Naive thymus-derived CD4-positive, alpha-beta T cell (primary cell): ENCODE measurements at regions of chr1 and their contacts with region 1.

Region 1: DNA sequence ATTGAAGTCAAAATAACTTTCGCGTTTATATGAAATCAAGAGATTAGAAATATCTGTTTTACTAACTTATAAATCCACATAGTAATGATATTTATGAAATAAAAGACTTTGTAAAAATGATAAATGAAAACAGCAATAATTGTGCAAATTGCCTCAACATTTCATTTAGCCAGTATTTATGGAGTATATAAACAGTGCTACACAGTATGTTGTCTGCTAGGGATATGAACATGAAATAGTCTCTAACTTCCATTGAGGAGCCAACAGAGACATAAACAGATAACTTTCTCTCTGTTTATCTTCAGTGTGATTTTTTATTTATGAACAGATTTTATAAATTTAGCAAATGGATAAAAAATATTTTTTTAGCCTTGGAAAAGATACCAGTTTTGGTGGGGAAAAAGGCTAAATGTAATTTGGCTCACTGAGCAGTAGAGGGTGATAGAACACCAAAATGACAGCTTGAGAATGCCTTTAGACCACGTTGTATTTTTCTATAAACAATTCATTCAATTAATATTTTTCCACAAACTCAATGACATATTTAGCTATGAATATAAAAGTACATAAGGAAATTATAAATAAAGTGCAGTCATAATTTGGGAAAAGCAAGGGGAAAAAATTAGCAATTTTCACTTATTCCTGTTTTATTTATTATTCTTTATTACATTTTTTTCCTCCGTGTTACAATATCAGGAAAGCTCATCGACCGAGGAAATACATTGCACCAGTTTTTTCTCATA is 47.5 kb upstream of the EEIG2 start:
- DNase-seq: peak in 6 of 9 donors; percentile 27 to 58 (median 50)
- ATAC-seq: peak; percentile 85
- H3K4me3 ChIP-seq: no peak overlapping the region
- H3K4me3 Mint-ChIP-seq: no peak overlapping the region
- H3K27ac ChIP-seq: no peak overlapping the region
- H3K27ac Mint-ChIP-seq: no peak overlapping the region
- H3K4me1 ChIP-seq: no peaks in the 10 kb centered on the region
- H3K4me1 Mint-ChIP-seq: no peaks in the 10 kb centered on the region
- H3K27me3 ChIP-seq: no peaks in the 10 kb centered on the region
- H3K27me3 Mint-ChIP-seq: peaks cover 4 to 64% (median 12%) of the 10 kb centered on the region in 5 donors

Region 2: DNA sequence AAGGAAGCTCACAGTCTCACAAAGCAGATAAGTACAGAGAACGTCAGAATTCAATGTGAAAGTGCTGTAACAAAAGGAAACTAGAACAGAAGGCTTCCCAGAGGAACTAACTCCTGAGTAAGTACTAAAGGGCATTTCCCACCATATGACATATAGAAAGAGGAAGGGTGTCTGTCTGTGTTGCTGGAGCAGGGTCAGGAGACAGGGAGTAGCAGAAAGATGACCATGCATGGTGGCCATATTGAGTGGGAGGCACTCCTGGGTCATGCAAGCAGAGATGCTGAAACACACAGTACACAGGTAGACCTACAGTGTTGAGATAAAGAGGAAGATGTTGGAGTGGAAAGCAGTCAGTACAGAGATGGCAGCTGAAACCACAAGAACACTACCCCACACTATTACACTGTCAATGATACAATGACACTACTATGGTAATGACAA is 359.6 kb before region 1 on chr1:
- CTCF ChIA-PET with region 1: no interaction called
- POLR2A ChIA-PET with region 1: no interaction called
- intact Hi-C with region 1: no loop called
- DNase-seq: no peak
- ATAC-seq: peak; percentile 42
- H3K4me3 ChIP-seq: no peak overlapping the region
- H3K4me3 Mint-ChIP-seq: no peak overlapping the region
- H3K27ac ChIP-seq: no peak overlapping the region
- H3K27ac Mint-ChIP-seq: no peak overlapping the region
- H3K4me1 ChIP-seq: no peaks in the 10 kb centered on the region
- H3K4me1 Mint-ChIP-seq: no peaks in the 10 kb centered on the region
- H3K27me3 ChIP-seq: no peaks in the 10 kb centered on the region
- H3K27me3 Mint-ChIP-seq: no peaks in the 10 kb centered on the region

Region 3: GRCh38 chr1:108570128-108570527 is 57.7 kb after region 1 on chr1:
- CTCF ChIA-PET with region 1: interaction called, 5 read pairs
- POLR2A ChIA-PET with region 1: no interaction called
- intact Hi-C with region 1: loop called in 1 of 2 experiments (anchors 2 kb)
- DNase-seq: peak in 4 of 9 donors; percentile 13 to 37 (median 20)
- ATAC-seq: peak; percentile 96
- H3K4me3 ChIP-seq: no peak overlapping the region
- H3K4me3 Mint-ChIP-seq: no peak overlapping the region
- H3K27ac ChIP-seq: no peak overlapping the region
- H3K27ac Mint-ChIP-seq: no peak overlapping the region
- H3K4me1 ChIP-seq: peaks cover 0 to 6% of the 10 kb centered on the region in 2 donors
- H3K4me1 Mint-ChIP-seq: peaks cover 0 to 6% (median 4%) of the 10 kb centered on the region in 7 donors
- H3K27me3 ChIP-seq: no peaks in the 10 kb centered on the region
- H3K27me3 Mint-ChIP-seq: no peaks in the 10 kb centered on the region

Region 4: GRCh38 chr1:108643492-108644335 is 131.3 kb after region 1 on chr1:
- CTCF ChIA-PET with region 1: interaction called, 64 read pairs
- POLR2A ChIA-PET with region 1: interaction called, 10 read pairs
- intact Hi-C with region 1: loop called (anchors 1 kb)
- DNase-seq: peak in 7 of 9 donors; percentile 59 to 78 (median 67)
- ATAC-seq: peak; percentile 45
- H3K4me3 ChIP-seq: no peak overlapping the region
- H3K4me3 Mint-ChIP-seq: peak overlapping the region in 9 of 10 donors; percentile 4 to 70 (median 47)
- H3K27ac ChIP-seq: peak overlapping the region; percentile 71
- H3K27ac Mint-ChIP-seq: peak overlapping the region; percentile 68 to 100 (median 98)
- H3K4me1 ChIP-seq: peaks cover 49 to 52% of the 10 kb centered on the region in 2 donors
- H3K4me1 Mint-ChIP-seq: peaks cover 55 to 81% (median 75%) of the 10 kb centered on the region in 7 donors
- H3K27me3 ChIP-seq: no peaks in the 10 kb centered on the region
- H3K27me3 Mint-ChIP-seq: no peaks in the 10 kb centered on the region

Region 5: GRCh38 chr1:108708691-108709660 is 196.6 kb after region 1 on chr1:
- CTCF ChIA-PET with region 1: no interaction called
- POLR2A ChIA-PET with region 1: no interaction called
- intact Hi-C with region 1: loop called (anchors 1 to 2 kb)
- DNase-seq: peak; percentile 24 to 65 (median 54)
- ATAC-seq: peak; percentile 87
- H3K4me3 ChIP-seq: no peak overlapping the region
- H3K4me3 Mint-ChIP-seq: peak overlapping the region in 2 of 10 donors; percentile 15 to 38
- H3K27ac ChIP-seq: no peak overlapping the region
- H3K27ac Mint-ChIP-seq: peak overlapping the region in 3 of 9 donors; percentile 1 to 38 (median 2)
- H3K4me1 ChIP-seq: peaks cover 21 to 24% of the 10 kb centered on the region in 2 donors
- H3K4me1 Mint-ChIP-seq: peaks cover 7 to 44% (median 33%) of the 10 kb centered on the region in 7 donors
- H3K27me3 ChIP-seq: no peaks in the 10 kb centered on the region
- H3K27me3 Mint-ChIP-seq: peaks cover 0 to 20% (median 0%) of the 10 kb centered on the region in 5 donors

Region 6: GRCh38 chr1:108828022-108828961 is 315.9 kb after region 1 on chr1:
- CTCF ChIA-PET with region 1: no interaction called
- POLR2A ChIA-PET with region 1: no interaction called
- intact Hi-C with region 1: loop called in 1 of 2 experiments (anchors 1 kb)
- DNase-seq: peak; percentile 37 to 62 (median 46)
- ATAC-seq: peak; percentile 61
- H3K4me3 ChIP-seq: no peak overlapping the region
- H3K4me3 Mint-ChIP-seq: no peak overlapping the region
- H3K27ac ChIP-seq: no peak overlapping the region
- H3K27ac Mint-ChIP-seq: no peak overlapping the region
- H3K4me1 ChIP-seq: no peaks in the 10 kb centered on the region
- H3K4me1 Mint-ChIP-seq: peaks cover 0 to 9% (median 0%) of the 10 kb centered on the region in 7 donors
- H3K27me3 ChIP-seq: peaks cover 0 to 3% of the 10 kb centered on the region in 2 donors
- H3K27me3 Mint-ChIP-seq: peaks cover 0 to 12% (median 0%) of the 10 kb centered on the region in 5 donors

Region 7: GRCh38 chr1:108897865-108898720 is 385.7 kb after region 1 on chr1:
- CTCF ChIA-PET with region 1: no interaction called
- POLR2A ChIA-PET with region 1: no interaction called
- intact Hi-C with region 1: loop called (anchors 1 to 5 kb)
- DNase-seq: peak in 7 of 9 donors; percentile 30 to 67 (median 54)
- ATAC-seq: peak; percentile 82
- H3K4me3 ChIP-seq: no peak overlapping the region
- H3K4me3 Mint-ChIP-seq: no peak overlapping the region
- H3K27ac ChIP-seq: no peak overlapping the region
- H3K27ac Mint-ChIP-seq: no peak overlapping the region
- H3K4me1 ChIP-seq: no peaks in the 10 kb centered on the region
- H3K4me1 Mint-ChIP-seq: peaks cover 0 to 4% (median 1%) of the 10 kb centered on the region in 7 donors
- H3K27me3 ChIP-seq: no peaks in the 10 kb centered on the region
- H3K27me3 Mint-ChIP-seq: peaks cover 0 to 4% (median 3%) of the 10 kb centered on the region in 5 donors